Calu3 (cell line): ENCODE measurements at regions of chr7 and their contacts with region 1.

Region 1: DNA sequence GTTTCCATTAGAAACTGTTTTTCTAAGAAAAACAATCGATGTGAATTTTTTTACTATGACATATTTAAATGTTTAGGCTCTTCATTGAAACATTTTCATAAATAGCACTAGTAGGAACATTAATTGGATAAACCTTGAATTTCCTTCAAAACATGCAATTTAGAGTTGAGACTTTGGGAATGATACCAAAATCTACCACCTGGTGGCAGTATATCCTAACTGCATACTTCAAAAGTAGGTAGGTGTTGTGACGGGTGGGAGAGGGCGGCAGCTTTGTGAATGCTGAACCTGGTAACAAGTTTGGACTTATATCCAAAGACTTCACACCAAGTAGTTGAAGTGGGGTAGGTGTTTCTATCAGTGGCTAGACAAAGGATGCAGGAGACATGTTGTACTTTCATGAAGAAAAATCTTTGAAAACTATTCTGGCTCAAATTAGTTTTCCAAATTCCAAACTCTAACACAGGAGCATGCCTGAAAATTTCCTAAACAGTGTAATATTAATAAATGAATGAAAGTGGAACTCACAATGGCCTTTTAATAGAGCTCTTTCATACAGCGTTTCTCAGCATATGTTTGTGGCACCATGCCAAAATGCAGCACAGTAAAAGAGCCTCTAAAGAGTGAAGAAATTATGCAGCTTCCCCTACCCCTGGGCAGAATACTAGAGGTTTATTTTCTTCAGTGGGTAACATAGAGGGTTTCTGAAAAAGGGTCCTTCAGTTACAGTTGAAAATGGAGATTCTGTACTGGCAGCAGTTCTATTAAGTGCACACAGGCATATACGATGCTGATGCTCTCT is 201.0 kb upstream of the TPK1 start:
- DNase-seq: peak; percentile 52
- H3K4me3 Mint-ChIP-seq: no peak overlapping the region
- H3K27ac Mint-ChIP-seq: no peak overlapping the region
- H3K4me1 Mint-ChIP-seq: no peaks in the 10 kb centered on the region
- H3K27me3 Mint-ChIP-seq: no peaks in the 10 kb centered on the region
- CTCF ChIP-seq: peak; percentile 65

Region 2: GRCh38 chr7:145134377-145134776 is 97.6 kb after region 1 on chr7:
- CTCF ChIA-PET with region 1: no interaction called
- intact Hi-C with region 1: no loop called
- DNase-seq: no peak
- H3K4me3 Mint-ChIP-seq: no peak overlapping the region
- H3K27ac Mint-ChIP-seq: no peak overlapping the region
- H3K4me1 Mint-ChIP-seq: no peaks in the 10 kb centered on the region
- H3K27me3 Mint-ChIP-seq: no peaks in the 10 kb centered on the region
- CTCF ChIP-seq: no peak

Region 3: GRCh38 chr7:146090023-146090645 is 1053.3 kb after region 1 on chr7:
- CTCF ChIA-PET with region 1: no interaction called
- intact Hi-C with region 1: loop called (anchors 1 kb)
- DNase-seq: peak; percentile 1
- H3K4me3 Mint-ChIP-seq: no peak overlapping the region
- H3K27ac Mint-ChIP-seq: no peak overlapping the region
- H3K4me1 Mint-ChIP-seq: no peaks in the 10 kb centered on the region
- H3K27me3 Mint-ChIP-seq: no peaks in the 10 kb centered on the region
- CTCF ChIP-seq: peak; percentile 42